ENCODE measurements at regions of chr4 and their contacts with region 1.

Region 1: GRCh38 chr4:102263011-102263787 is 82.1 kb downstream of the SLC39A8 start:
- DNase-seq: peak in 1 of 2 experiments; percentile 45
- H3K4me3 ChIP-seq: no peak overlapping the region
- H3K4me3 Mint-ChIP-seq: no peak overlapping the region
- H3K27ac Mint-ChIP-seq: no peak overlapping the region
- H3K4me1 ChIP-seq: no peaks in the 10 kb centered on the region
- H3K4me1 Mint-ChIP-seq: peaks cover 6% of the 10 kb centered on the region
- H3K27me3 ChIP-seq: no peaks in the 10 kb centered on the region
- H3K27me3 Mint-ChIP-seq: no peaks in the 10 kb centered on the region
- CTCF ChIP-seq: peak; percentile 36 to 52

Region 2: DNA sequence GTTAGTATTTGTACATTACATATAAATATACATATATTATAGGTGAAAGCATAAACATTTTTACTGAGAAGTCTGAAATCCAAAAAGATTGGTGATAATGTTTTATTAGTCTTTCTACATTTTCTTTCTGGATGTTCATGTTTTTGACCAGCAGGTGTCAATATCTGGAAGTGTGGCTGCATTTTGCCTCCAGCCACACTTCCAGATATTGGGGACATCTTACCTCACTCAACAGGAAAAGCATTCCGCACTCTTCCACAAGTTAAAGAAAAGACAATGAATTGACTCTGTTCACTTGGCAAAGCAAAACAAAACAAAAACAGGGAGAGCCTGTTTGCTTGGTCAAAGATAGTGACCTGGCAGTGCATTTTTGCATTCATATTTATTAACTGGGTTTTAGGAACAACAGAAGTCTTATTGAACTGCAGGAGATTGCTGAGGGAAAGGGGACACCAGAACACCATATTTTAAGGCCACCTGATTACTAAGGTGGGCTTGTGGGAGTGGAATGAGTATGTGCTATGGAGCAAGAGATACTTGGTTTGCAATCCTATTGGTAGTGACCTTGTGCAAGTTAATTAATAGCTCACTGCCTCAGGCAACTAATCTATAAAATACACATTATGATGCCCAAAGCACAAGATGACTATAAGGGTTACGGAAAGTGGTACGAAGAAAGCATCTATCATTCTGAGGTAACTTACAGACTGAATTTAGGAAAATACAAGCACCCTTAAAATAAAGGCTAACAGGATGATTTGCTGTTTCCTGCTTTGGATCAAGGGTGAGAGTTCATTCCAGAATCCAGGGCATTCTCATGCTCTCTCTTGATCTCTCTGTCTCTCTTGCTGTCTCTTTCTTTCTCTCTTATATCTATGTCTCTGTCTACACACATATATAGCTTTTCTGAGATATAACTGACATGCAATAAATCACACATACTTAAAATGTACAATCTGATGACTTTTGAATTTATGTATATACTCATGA is 1355.4 kb before region 1 on chr4:
- CTCF ChIA-PET with region 1: no interaction called
- POLR2A ChIA-PET with region 1: no interaction called
- intact Hi-C with region 1: loop called (anchors 1 kb)
- DNase-seq: peak in 1 of 2 experiments; percentile 2
- H3K4me3 ChIP-seq: no peak overlapping the region
- H3K4me3 Mint-ChIP-seq: no peak overlapping the region
- H3K27ac Mint-ChIP-seq: no peak overlapping the region
- H3K4me1 ChIP-seq: no peaks in the 10 kb centered on the region
- H3K4me1 Mint-ChIP-seq: peaks cover 6% of the 10 kb centered on the region
- H3K27me3 ChIP-seq: no peaks in the 10 kb centered on the region
- H3K27me3 Mint-ChIP-seq: peaks cover 7% of the 10 kb centered on the region
- CTCF ChIP-seq: peak in 1 of 2 experiments; percentile 36

Region 3: DNA sequence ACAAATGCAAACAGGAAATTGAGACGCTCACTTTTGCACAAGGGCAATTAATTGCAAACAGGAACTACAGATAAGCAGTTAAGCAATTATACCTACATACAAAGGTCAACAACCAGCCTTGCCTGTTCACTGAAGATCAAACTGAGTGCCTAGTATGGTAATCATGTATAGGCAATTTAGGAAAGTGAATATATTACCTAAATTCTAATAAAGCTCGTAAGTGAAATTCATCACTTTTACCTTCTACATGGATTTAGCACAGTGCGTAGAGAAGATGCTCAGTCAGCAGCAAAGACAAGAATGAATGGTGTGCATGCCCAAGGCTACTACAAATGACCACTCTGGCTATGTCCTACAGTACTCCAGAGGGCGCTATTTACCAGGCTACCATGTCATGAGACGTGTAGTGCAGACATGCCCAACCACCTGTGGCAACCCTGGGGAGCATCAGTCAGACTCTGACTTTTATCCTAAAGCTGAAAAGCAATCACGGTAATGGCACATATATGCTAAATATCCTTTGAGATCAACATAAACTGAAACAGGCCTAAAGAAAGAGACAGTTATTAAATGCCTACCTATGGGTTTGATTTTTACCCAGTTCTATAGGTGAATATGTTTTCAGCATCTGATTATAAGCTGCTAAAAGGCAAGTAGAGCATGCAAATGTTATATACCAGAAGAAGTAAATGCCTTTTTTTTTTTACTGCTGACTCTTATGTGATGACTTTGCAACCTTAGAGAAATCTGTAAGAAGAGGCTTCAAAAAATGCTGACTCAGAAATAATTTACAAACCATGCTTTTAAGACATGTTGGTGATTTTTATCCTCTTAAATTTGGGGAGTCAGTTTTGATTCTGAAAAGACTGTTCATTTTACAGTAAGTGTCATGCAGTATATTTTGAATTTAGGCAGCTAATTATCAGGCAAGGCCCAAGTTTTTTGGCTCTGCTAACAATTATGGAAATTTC is 1093.9 kb before region 1 on chr4:
- CTCF ChIA-PET with region 1: no interaction called
- POLR2A ChIA-PET with region 1: no interaction called
- intact Hi-C with region 1: loop called (anchors 1 kb)
- DNase-seq: peak; percentile 75 to 76
- H3K4me3 ChIP-seq: no peak overlapping the region
- H3K4me3 Mint-ChIP-seq: no peak overlapping the region
- H3K27ac Mint-ChIP-seq: no peak overlapping the region
- H3K4me1 ChIP-seq: peaks cover 10% of the 10 kb centered on the region; the same call in 1 of the 2 replicates
- H3K4me1 Mint-ChIP-seq: peaks cover 6% of the 10 kb centered on the region
- H3K27me3 ChIP-seq: no peaks in the 10 kb centered on the region
- H3K27me3 Mint-ChIP-seq: no peaks in the 10 kb centered on the region
- CTCF ChIP-seq: peak; percentile 71 to 72

Region 4: DNA sequence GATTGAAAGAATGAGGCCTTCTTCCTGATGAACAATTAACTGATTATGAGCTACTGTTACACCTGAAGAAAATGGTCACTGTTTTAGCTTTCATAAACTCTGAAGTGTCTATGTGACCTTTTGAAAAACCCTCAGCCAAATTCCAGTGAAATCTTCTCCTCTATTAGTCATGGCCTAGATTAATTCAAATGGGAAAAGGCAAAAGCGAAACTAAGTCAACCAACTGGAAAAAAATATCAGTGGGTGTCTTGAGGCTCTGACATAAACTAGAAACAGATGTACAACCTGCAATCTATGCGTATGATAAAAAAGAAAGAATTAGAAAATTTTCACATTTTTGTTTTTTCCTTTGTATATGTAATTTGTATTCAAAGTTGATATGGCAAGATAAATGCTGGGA is 642.1 kb before region 1 on chr4:
- CTCF ChIA-PET with region 1: no interaction called
- POLR2A ChIA-PET with region 1: no interaction called
- intact Hi-C with region 1: loop called (anchors 10 kb)
- DNase-seq: no peak
- H3K4me3 ChIP-seq: no peak overlapping the region
- H3K4me3 Mint-ChIP-seq: no peak overlapping the region
- H3K27ac Mint-ChIP-seq: no peak overlapping the region
- H3K4me1 ChIP-seq: no peaks in the 10 kb centered on the region
- H3K4me1 Mint-ChIP-seq: no peaks in the 10 kb centered on the region
- H3K27me3 ChIP-seq: no peaks in the 10 kb centered on the region
- H3K27me3 Mint-ChIP-seq: peaks cover 9% of the 10 kb centered on the region
- CTCF ChIP-seq: no peak

Region 5: GRCh38 chr4:101730291-101731117 is 532.7 kb before region 1 on chr4:
- CTCF ChIA-PET with region 1: no interaction called
- POLR2A ChIA-PET with region 1: no interaction called
- intact Hi-C with region 1: loop called (anchors 1 kb)
- DNase-seq: peak; percentile 72 to 75
- H3K4me3 ChIP-seq: no peak overlapping the region
- H3K4me3 Mint-ChIP-seq: no peak overlapping the region
- H3K27ac Mint-ChIP-seq: no peak overlapping the region
- H3K4me1 ChIP-seq: no peaks in the 10 kb centered on the region
- H3K4me1 Mint-ChIP-seq: no peaks in the 10 kb centered on the region
- H3K27me3 ChIP-seq: no peaks in the 10 kb centered on the region
- H3K27me3 Mint-ChIP-seq: no peaks in the 10 kb centered on the region
- CTCF ChIP-seq: peak; percentile 60 to 62

Measured in Caco-2 (cell line).